ENCODE measurements at regions of chr3 and their contacts with region 1.

Region 1: GRCh38 chr3:138347960-138348753 is at the start of gene MRAS:
- DNase-seq: peak; percentile 55
- H3K4me3 ChIP-seq: peak within 1 kb of the TSS; percentile 34 to 64 (median 58)
- H3K27ac ChIP-seq: peak within 1 kb of the TSS; percentile 48
- H3K4me1 ChIP-seq: peaks cover 3% of the 10 kb centered on the region
- H3K27me3 ChIP-seq: no peaks in the 10 kb centered on the region
- CTCF ChIP-seq: peak; percentile 39 to 57
- POLR2A ChIP-seq: peak; percentile 38
- total RNA-seq, gene MRAS: 15.5 and 16.5 TPM in 2 replicates

Region 2: DNA sequence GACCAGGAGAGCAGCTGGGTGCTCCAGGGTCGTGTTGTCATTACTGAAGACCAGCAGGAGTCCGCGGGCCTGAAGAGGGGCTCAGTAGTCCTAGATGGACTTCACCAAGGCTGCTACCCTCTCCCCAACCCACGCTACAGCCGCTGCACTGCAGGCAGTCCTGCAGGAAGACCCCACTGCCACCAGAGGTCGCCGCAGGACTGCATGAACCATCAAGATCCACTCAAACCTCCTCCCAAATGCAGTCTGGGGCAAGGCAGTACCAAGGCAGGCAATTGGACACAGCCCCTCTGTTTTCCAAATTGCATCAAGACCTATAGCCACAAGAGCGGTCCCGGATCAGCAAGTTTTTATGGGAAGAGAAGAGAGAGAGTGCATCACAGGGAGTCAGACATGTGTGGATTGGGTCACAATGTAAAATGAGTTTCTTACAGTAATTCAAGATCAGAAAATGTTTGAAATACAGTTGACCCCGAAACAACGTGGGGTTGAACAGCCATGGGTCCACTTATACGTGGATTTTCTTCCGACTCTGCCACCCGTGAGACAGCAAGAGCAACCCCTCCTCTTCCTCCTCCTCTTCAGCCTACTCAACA is 279.5 kb before region 1 on chr3:
- CTCF ChIA-PET with region 1: no interaction called
- POLR2A ChIA-PET with region 1: no interaction called
- dilution Hi-C with region 1: no loop called
- intact Hi-C with region 1: loop called (anchors 2 kb)
- DNase-seq: peak; percentile 62
- H3K4me3 ChIP-seq: no peak overlapping the region
- H3K27ac ChIP-seq: no peak overlapping the region
- H3K4me1 ChIP-seq: no peaks in the 10 kb centered on the region
- H3K27me3 ChIP-seq: no peaks in the 10 kb centered on the region
- CTCF ChIP-seq: peak; percentile 95 to 98
- POLR2A ChIP-seq: no peak

Region 3: GRCh38 chr3:138118612-138119422 is 229.3 kb before region 1 on chr3:
- CTCF ChIA-PET with region 1: no interaction called
- POLR2A ChIA-PET with region 1: no interaction called
- dilution Hi-C with region 1: no loop called
- intact Hi-C with region 1: loop called (anchors 5 kb)
- DNase-seq: peak; percentile 77
- H3K4me3 ChIP-seq: no peak overlapping the region
- H3K27ac ChIP-seq: no peak overlapping the region
- H3K4me1 ChIP-seq: peaks cover 5% of the 10 kb centered on the region
- H3K27me3 ChIP-seq: peaks cover 0 to 2% of the 10 kb centered on the region in 2 experiments
- CTCF ChIP-seq: peak; percentile 79 to 86
- POLR2A ChIP-seq: no peak

Region 4: GRCh38 chr3:138180375-138181029 is 167.7 kb before region 1 on chr3:
- CTCF ChIA-PET with region 1: no interaction called
- POLR2A ChIA-PET with region 1: no interaction called
- dilution Hi-C with region 1: no loop called
- intact Hi-C with region 1: loop called (anchors 1 kb)
- DNase-seq: peak; percentile 50
- H3K4me3 ChIP-seq: no peak overlapping the region
- H3K27ac ChIP-seq: no peak overlapping the region
- H3K4me1 ChIP-seq: no peaks in the 10 kb centered on the region
- H3K27me3 ChIP-seq: peaks cover 7 to 13% of the 10 kb centered on the region in 2 experiments
- CTCF ChIP-seq: peak; percentile 19 to 21
- POLR2A ChIP-seq: no peak

Region 5: GRCh38 chr3:138186803-138187295 is 161.3 kb before region 1 on chr3:
- CTCF ChIA-PET with region 1: no interaction called
- POLR2A ChIA-PET with region 1: no interaction called
- dilution Hi-C with region 1: no loop called
- intact Hi-C with region 1: loop called (anchors 1 kb)
- DNase-seq: peak; percentile 94
- H3K4me3 ChIP-seq: peak overlapping the region; percentile 74 to 86 (median 81)
- H3K27ac ChIP-seq: peak overlapping the region; percentile 93
- H3K4me1 ChIP-seq: peaks cover 10% of the 10 kb centered on the region
- H3K27me3 ChIP-seq: peaks cover 2 to 5% of the 10 kb centered on the region in 2 experiments
- CTCF ChIP-seq: no peak
- POLR2A ChIP-seq: no peak

Region 6: DNA sequence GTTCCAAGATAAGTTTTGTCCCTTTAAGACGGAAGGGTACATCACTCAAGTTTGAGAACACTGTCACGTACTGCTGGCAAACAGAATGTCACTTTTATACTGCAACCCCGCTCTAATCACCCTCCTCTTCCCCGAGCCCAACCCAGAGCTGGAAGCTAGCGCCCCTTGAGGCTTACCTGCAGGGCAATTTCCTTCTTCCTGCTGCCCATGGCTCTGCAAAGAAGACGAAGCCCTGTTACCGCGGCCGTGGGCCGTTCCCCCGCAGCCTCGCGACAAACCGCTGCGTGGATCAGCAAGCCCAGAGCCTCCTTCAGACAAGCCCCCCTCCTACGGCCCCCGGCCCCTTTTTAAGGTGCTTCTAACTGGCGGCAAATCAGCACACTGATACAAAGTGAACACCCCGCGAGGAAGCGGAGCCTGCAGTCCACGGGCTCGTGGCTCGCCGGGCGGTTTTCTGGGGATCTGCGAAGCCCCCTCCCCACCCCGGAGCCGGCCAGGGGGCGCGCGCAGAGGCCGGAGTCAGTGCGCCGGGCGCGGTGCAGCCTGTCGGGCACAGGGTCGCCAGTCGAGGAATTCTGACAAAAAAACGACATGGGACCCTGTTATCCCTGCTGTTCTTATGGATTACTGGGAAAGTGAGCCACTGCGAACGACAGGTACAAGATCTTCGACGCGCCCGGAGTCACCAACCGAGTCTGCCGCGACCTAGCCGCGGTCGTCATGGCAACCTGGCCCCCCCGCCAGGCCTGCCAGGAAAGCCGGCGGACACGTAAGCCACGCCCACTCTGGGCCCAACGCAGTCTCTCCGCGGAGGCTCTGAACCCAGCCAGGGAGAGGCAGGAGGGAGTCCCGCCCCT is 18.8 kb before region 1 on chr3 and contains the start of gene NME9:
- CTCF ChIA-PET with region 1: interaction called, 10 read pairs
- POLR2A ChIA-PET with region 1: no interaction called
- dilution Hi-C with region 1: no loop called
- intact Hi-C with region 1: loop called (anchors 1 kb)
- DNase-seq: peak; percentile 88
- H3K4me3 ChIP-seq: peak within 1 kb of the TSS; percentile 32 to 53 (median 52)
- H3K27ac ChIP-seq: no peak within 1 kb of the TSS
- H3K4me1 ChIP-seq: peaks cover 20% of the 10 kb centered on the region
- H3K27me3 ChIP-seq: peaks cover 2 to 3% of the 10 kb centered on the region in 2 experiments
- CTCF ChIP-seq: peak; percentile 54 to 69
- POLR2A ChIP-seq: no peak
- total RNA-seq, gene NME9: not detected in 2 replicates

Region 7: GRCh38 chr3:138941259-138941885 is 593.2 kb after region 1 on chr3:
- CTCF ChIA-PET with region 1: interaction called, 4 read pairs
- POLR2A ChIA-PET with region 1: no interaction called
- dilution Hi-C with region 1: no loop called
- intact Hi-C with region 1: loop called (anchors 10 kb)
- DNase-seq: no peak
- H3K4me3 ChIP-seq: no peak overlapping the region
- H3K27ac ChIP-seq: no peak overlapping the region
- H3K4me1 ChIP-seq: peaks cover 5% of the 10 kb centered on the region
- H3K27me3 ChIP-seq: peaks cover 85 to 99% of the 10 kb centered on the region in 2 experiments
- CTCF ChIP-seq: peak; percentile 49 to 66
- POLR2A ChIP-seq: no peak